ENCODE measurements at regions of chr12 and their contacts with region 1.

Region 1: DNA sequence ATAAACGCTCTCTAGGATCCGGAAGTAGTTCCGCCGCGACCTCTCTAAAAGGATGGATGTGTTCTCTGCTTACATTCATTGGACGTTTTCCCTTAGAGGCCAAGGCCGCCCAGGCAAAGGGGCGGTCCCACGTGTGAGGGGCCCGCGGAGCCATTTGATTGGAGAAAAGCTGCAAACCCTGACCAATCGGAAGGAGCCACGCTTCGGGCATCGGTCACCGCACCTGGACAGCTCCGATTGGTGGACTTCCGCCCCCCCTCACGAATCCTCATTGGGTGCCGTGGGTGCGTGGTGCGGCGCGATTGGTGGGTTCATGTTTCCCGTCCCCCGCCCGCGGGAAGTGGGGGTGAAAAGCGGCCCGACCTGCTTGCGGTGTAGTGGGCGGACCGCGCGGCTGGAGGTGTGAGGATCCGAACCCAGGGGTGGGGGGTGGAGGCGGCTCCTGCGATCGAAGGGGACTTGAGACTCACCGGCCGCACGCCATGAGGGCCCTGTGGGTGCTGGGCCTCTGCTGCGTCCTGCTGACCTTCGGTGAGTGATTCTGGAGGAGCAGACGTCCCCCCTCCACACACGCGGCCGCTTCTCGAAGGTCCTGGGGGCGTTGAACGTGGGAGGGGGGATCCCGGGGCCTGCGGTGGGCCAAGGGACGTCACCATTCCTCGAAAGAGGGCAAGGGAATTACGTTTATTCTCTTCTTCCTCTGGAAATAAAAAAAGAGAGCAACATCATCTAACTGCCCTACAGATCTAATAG is at the start of gene HSP90B1:
- DNase-seq: peak; percentile 99
- H3K4me3 Mint-ChIP-seq: peak within 1 kb of the TSS; percentile 86
- H3K27ac Mint-ChIP-seq: peak within 1 kb of the TSS; percentile 100
- H3K4me1 Mint-ChIP-seq: peaks cover 46% of the 10 kb centered on the region
- H3K27me3 Mint-ChIP-seq: no peaks in the 10 kb centered on the region
- total RNA-seq, gene HSP90B1: 615 and 617 TPM in 2 replicates

Region 2: DNA sequence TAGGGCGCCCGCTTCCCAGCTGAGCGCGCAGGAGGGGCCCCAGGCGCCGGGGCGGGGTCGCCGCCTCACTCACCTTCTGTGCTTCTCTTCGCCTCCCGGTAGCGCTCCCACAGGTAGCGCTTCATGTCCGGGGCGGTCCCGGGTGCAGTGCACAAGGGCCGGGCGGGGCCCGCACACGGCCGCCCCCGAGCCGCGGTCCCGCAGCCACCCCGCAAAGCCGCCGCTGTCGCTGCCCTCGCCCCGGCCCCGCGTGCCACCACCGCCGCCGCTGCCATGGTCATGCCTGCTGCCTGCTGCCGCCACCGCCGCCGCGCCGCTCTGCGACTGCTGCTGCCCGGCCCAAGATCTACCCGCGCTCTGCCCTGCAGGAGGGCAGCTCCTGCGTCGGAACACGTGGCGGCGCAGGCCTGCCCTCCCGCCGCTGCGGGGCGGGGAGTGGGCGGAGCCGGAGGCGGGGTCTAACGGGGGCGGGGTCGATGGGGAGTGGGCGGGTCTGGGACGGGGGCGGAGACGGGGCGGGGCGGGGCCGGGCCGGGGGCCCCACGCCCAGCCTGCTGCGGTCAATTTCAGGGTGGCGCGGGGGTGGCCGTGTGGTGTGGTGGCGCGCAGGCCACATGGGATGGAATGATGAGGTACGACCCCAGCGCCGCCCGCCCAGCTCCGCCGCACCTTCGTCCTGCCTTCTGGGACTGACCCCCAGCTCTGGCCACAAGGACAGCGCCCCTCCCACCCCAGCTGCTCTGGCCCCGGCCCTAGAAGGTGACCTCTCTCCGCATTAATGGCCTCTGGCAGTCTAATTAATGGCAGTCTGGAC is 89.1 kb before region 1 on chr12 and contains the start of gene NT5DC3:
- intact Hi-C with region 1: loop called (anchors 1 kb)
- DNase-seq: peak; percentile 77
- H3K4me3 Mint-ChIP-seq: peak within 1 kb of the TSS; percentile 89
- H3K27ac Mint-ChIP-seq: peak within 1 kb of the TSS; percentile 77
- H3K4me1 Mint-ChIP-seq: peaks cover 18% of the 10 kb centered on the region
- H3K27me3 Mint-ChIP-seq: peaks cover 12% of the 10 kb centered on the region
- total RNA-seq, gene NT5DC3: 10.9 and 12.0 TPM in 2 replicates

Region 3: DNA sequence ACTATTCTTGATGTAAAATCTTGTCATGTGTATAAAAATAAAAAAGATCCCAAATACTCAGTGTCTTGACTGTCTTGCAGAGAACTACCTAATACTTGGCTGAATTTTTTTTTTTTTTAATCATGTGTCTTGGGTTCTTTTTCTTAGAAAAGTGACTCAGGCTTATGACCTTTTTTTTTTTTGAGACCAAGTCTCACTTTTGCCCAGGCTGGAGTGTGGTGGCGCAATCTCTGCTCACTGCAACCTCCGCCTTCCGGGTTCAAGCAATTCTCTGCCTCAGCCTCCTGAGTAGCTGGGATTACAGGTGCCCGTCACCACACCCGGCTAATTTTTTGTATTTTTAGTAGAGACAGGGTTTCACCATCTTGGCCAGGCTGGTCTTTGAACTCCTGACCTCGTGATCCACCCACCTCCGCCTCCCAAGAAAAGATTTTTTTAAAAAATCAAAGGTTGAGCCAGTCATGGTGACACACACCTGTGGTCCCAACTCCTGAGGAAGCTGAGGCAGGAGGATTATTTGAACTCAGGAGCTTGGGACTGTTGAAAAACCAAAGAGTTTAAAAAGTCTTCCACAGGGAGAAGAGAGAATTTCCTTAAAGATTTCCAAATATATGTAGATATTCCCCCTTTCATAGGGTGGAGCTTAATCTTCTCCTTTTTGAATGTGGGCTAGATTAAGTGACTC is 17.8 kb after region 1 on chr12:
- intact Hi-C with region 1: loop called (anchors 1 kb)
- DNase-seq: no peak
- H3K4me3 Mint-ChIP-seq: peak overlapping the region; percentile 21
- H3K27ac Mint-ChIP-seq: peak overlapping the region; percentile 71
- H3K4me1 Mint-ChIP-seq: peaks cover 53% of the 10 kb centered on the region
- H3K27me3 Mint-ChIP-seq: no peaks in the 10 kb centered on the region

Region 4: DNA sequence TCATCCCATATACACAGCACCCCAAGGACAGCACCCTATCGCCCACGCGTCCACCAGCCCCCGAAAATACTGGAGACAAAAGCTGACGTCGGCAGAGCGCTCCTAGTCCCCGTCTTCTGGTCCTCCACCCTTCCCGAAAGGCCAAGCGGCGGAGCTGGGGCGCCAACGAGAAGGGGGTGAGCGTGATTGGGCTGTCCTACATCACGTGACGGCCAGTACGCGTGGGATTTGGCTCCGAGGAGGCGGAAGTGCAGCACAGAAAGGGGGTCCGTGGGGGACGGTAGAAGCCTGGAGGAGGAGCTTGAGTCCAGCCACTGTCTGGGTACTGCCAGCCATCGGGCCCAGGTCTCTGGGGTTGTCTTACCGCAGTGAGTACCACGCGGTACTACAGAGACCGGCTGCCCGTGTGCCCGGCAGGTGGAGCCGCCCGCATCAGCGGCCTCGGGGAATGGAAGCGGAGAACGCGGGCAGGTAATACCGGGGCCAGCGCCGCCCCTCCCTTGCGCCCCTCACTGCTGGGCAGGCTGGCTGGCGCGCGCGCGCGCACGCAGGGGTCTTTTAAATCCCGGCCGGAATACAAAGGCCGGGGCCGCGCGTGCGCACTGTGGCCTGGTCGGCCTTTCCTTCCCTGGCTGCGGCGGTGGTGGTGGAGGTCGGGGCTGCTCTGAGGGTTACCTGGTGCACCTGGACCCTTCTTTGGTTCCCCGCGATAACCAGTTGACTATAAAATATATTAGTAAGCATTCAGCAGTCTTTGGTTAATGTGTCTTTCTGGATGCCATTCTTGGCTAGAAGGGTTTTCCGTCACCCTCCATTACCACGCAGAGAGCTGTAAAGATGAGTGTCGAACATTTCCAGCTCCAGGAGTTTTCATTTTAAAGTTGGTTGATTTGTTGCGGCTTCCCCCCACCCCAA is 35.6 kb after region 1 on chr12 and contains the start of gene TDG:
- intact Hi-C with region 1: loop called (anchors 1 kb)
- DNase-seq: peak; percentile 96
- H3K4me3 Mint-ChIP-seq: peak within 1 kb of the TSS; percentile 98
- H3K27ac Mint-ChIP-seq: peak within 1 kb of the TSS; percentile 99
- H3K4me1 Mint-ChIP-seq: peaks cover 28% of the 10 kb centered on the region
- H3K27me3 Mint-ChIP-seq: no peaks in the 10 kb centered on the region
- total RNA-seq, gene TDG: 76.6 and 77.3 TPM in 2 replicates

Region 5: GRCh38 chr12:103986829-103987228 is 56.6 kb after region 1 on chr12:
- intact Hi-C with region 1: no loop called
- DNase-seq: no peak
- H3K4me3 Mint-ChIP-seq: no peak overlapping the region
- H3K27ac Mint-ChIP-seq: no peak overlapping the region
- H3K4me1 Mint-ChIP-seq: no peaks in the 10 kb centered on the region
- H3K27me3 Mint-ChIP-seq: no peaks in the 10 kb centered on the region

Region 6: DNA sequence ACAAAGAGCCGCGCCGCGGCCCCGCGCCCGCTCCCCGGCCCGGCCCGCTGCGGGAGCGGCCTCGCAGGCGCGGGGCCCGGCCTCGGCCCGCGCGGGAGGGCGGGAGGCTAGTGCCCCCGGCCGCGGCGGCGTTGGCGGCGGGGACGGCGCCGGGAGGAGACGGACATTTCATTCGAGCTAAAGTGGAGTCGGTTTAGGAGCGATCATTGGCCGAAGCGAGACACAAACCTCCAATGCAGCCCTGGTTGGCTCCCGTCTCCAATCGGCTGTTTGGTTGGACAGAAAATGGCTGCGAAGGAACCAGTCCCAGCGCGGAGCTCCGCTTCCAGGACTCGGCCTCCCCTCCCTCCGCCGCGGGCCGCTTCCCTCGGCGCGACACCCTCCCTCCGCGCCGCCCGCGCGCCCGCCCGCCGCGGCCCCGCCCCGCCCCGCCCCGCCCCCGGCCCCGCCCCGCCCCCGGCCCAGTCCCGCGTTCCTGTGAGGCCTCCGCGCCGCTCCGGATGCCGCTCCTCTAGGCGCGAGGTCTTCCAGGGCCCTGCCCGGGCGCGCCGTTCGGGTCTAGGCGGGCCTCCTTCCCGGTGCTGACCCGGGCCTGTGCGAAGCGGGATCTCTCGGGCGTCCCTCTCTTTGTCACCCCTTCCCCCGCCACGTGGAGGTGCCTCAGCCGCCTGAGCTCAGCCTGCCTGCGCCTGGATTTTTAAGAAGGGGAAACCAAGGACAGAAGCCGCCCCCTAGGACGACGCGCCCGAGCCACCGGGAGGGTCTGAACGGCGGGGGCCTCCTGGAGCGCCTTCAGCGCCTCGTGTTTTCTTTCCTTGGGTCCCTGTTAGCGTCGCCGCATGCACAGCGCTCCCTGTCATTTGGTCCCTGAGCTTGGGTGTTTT is 207.9 kb after region 1 on chr12 and contains the start of gene NFYB:
- intact Hi-C with region 1: loop called (anchors 5 kb)
- DNase-seq: peak; percentile 91
- H3K4me3 Mint-ChIP-seq: peak within 1 kb of the TSS; percentile 84
- H3K27ac Mint-ChIP-seq: peak within 1 kb of the TSS; percentile 86
- H3K4me1 Mint-ChIP-seq: peaks cover 17% of the 10 kb centered on the region
- H3K27me3 Mint-ChIP-seq: peaks cover 14% of the 10 kb centered on the region
- total RNA-seq, gene NFYB: 29.0 and 30.0 TPM in 2 replicates

Region 7: DNA sequence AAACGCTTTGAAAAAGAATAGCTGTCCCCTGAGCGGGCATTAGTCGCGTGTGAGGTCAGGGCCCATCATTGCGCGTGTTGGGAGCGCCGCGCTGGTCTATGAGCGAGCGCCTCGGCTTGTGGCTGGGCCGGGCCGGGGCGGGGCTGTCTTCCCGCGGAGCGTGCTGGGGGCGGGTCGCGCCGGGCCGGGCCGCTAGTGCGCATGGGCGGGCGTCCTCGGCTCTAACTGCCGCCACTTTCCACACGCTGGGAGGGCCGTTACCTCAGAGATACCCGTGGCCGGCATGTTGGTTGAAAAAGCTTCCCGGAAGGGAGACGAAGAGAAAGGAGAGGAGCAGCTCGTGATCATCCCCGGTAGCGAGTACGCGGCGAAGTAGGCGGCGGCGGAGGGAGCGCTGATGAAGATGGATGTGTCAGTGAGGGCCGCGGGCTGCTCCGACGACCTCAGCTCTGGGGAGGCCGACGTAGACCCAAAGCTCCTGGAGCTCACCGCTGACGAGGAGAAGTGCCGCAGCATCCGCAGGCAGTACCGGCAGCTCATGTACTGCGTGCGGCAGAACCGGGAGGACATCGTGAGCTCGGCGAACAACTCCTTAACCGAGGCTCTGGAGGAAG is 373.4 kb after region 1 on chr12 and contains the start of gene EID3:
- intact Hi-C with region 1: loop called (anchors 5 kb)
- DNase-seq: peak; percentile 91
- H3K4me3 Mint-ChIP-seq: peak within 1 kb of the TSS; percentile 90
- H3K27ac Mint-ChIP-seq: peak within 1 kb of the TSS; percentile 99
- H3K4me1 Mint-ChIP-seq: peaks cover 62% of the 10 kb centered on the region
- H3K27me3 Mint-ChIP-seq: no peaks in the 10 kb centered on the region
- total RNA-seq, gene EID3: 9.4 and 10.1 TPM in 2 replicates

Region 8: DNA sequence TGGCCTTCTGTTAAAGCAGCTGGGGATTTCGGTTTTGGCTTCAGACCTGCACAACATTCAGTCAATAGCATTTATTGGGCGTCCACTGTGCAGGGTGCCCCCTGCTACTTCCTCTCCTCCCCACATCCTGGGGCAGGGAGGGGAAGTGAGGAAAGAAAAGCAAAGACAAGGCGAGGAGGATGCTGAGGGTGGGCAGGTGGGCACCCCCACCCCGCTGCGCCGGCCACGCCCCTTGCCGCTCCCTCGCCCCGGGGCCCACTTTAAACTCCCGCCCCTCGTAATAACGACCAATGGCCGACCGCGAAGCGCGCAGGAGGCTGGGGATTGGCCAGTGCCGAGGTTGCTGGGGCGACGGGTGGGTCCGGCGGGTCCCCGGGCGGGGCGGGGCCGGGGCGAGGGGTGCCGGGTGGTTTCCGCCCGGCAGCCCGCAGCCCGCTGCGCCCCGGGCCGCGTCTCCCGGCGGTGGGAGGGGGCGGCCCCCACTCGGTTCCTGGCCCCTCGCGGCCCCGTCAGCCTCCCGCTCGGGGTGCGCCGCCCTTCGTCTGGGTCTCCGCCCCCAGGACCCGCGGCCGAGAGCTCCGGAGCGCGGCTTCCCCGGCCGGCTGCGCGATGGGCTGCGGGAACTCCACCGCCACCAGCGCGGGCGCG is 1400.2 kb after region 1 on chr12 and contains the start of gene C12orf75:
- intact Hi-C with region 1: loop called (anchors 2 kb)
- DNase-seq: peak; percentile 93
- H3K4me3 Mint-ChIP-seq: peak within 1 kb of the TSS; percentile 89
- H3K27ac Mint-ChIP-seq: peak within 1 kb of the TSS; percentile 97
- H3K4me1 Mint-ChIP-seq: peaks cover 66% of the 10 kb centered on the region
- H3K27me3 Mint-ChIP-seq: no peaks in the 10 kb centered on the region
- total RNA-seq, gene C12orf75: 246 and 252 TPM in 2 replicates

Measured in activated T-helper 2 cell treated with anti-CD3 and anti-CD28 coated beads, Interferon-gamma antibody, Interleukin-2, Interleukin-4, amounts not matched to agents 10 μg/mL and 5 μg/mL and 100 μg/mL, durations not matched to agents 14 hours and 24 hours and 36 hours (primary cell).